ENCODE measurements at regions of chr2 and their contacts with region 1.

Region 1: DNA sequence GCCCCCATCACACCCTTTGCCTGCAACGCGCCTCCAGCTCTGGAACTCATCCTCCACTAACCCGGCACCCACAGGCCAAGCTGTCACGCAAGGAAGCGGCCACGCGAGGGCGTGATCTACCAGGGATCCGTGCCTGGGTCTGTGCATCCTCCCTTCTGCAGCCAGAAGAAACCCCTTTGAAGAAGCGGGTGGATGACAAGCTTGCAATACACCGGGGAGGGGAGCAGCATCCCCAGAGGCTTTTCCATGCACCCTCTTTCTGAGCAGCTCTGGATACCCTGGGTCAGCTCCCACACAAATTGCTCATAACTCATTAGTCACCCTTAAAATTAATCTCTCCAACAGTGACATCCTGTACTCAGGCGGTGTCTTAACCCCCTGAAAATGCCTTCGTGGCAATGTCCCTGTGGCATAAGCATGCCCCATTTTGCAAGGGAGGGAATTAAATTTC is 47.6 kb downstream of the PDCL3 start:
- DNase-seq: peak; percentile 55 to 83 (median 65)
- ATAC-seq: peak; percentile 28 to 85 (median 78)
- H3K4me3 ChIP-seq: no peak overlapping the region
- H3K27ac ChIP-seq: no peak overlapping the region
- H3K4me1 ChIP-seq: peaks cover 0 to 2% (median 0%) of the 10 kb centered on the region in 12 donors
- H3K27me3 ChIP-seq: no peaks in the 10 kb centered on the region
- CTCF ChIP-seq: peak; percentile 43 to 73 (median 56)
- POLR2A ChIP-seq: no peak

Region 2: DNA sequence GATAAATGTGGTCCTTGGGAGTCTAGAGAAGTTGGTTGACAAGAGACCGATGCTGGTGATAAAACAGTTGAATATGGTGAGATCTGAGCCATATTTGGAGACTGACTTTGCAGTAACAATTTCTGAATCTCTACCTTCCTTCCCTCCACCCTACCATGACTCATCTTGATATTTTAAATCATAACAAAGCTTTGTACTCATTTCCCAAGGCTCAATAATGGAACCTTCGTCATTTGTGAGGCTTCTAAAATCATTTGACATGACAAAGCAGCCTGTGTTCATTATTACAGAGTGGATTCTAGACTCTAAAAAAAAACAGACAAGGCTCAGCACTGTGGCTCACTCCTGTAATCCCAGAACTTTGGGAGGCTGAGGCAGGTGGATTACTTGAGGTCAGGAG is 86.1 kb before region 1 on chr2:
- intact Hi-C with region 1: no loop called
- DNase-seq: no peak
- ATAC-seq: no peak
- H3K4me3 ChIP-seq: no peak overlapping the region
- H3K27ac ChIP-seq: no peak overlapping the region
- H3K4me1 ChIP-seq: no peaks in the 10 kb centered on the region
- H3K27me3 ChIP-seq: no peaks in the 10 kb centered on the region
- CTCF ChIP-seq: no peak
- POLR2A ChIP-seq: no peak

Region 3: GRCh38 chr2:100721693-100722092 is 111.3 kb after region 1 on chr2:
- intact Hi-C with region 1: loop called in 4 of 10 experiments (anchors 5 to 10 kb)
- DNase-seq: no peak
- ATAC-seq: no peak
- H3K4me3 ChIP-seq: no peak overlapping the region
- H3K27ac ChIP-seq: no peak overlapping the region
- H3K4me1 ChIP-seq: peaks cover 0 to 3% (median 0%) of the 10 kb centered on the region in 12 donors
- H3K27me3 ChIP-seq: no peaks in the 10 kb centered on the region
- CTCF ChIP-seq: no peak
- POLR2A ChIP-seq: no peak

Region 4: DNA sequence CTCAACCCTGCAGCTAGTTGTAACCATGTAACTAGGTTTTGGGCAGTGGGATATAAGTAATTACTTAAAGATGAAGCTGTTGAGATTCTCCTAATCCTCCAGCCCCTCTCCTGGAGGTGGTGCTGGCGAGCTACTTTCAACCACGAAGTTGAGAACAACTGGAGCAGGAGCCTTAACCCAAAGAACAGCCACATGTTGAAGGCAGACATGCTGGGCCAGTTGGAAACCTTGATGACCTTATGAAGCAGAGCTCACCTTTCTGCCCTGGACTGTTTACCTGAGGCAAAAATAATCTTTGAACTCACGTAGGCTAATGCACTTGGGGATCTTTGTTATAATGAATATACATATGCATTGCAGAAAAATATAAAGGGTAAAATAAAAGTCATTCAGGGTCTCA is 119.9 kb after region 1 on chr2:
- intact Hi-C with region 1: loop called in 5 of 10 experiments (anchors 5 to 10 kb)
- DNase-seq: peak in 4 of 5 donors; percentile 44 to 78 (median 65)
- ATAC-seq: peak; percentile 79 to 84 (median 82)
- H3K4me3 ChIP-seq: no peak overlapping the region
- H3K27ac ChIP-seq: no peak overlapping the region
- H3K4me1 ChIP-seq: peaks cover 0 to 11% (median 3%) of the 10 kb centered on the region in 12 donors
- H3K27me3 ChIP-seq: no peaks in the 10 kb centered on the region
- CTCF ChIP-seq: peak; percentile 58 to 85 (median 70)
- POLR2A ChIP-seq: no peak

Region 5: GRCh38 chr2:100802066-100802465 is 191.7 kb after region 1 on chr2:
- intact Hi-C with region 1: loop called in 1 of 10 experiments (anchors 10 kb)
- DNase-seq: no peak
- ATAC-seq: peak in 3 of 4 donors; percentile 32 to 61 (median 41)
- H3K4me3 ChIP-seq: no peak overlapping the region
- H3K27ac ChIP-seq: peak overlapping the region in 1 of 12 donors; percentile 9
- H3K4me1 ChIP-seq: peaks cover 0 to 8% (median 0%) of the 10 kb centered on the region in 12 donors
- H3K27me3 ChIP-seq: no peaks in the 10 kb centered on the region
- CTCF ChIP-seq: no peak
- POLR2A ChIP-seq: no peak

Region 6: GRCh38 chr2:100813527-100813926 is 203.1 kb after region 1 on chr2:
- intact Hi-C with region 1: loop called in 3 of 10 experiments (anchors 5 to 10 kb)
- DNase-seq: no peak
- ATAC-seq: peak; percentile 59 to 84 (median 69)
- H3K4me3 ChIP-seq: peak overlapping the region in 1 of 12 donors; percentile 2
- H3K27ac ChIP-seq: peak overlapping the region in 11 of 12 donors; percentile 32 to 84 (median 59)
- H3K4me1 ChIP-seq: peaks cover 4 to 58% (median 35%) of the 10 kb centered on the region in 12 donors
- H3K27me3 ChIP-seq: peaks cover 0 to 5% (median 0%) of the 10 kb centered on the region in 9 donors
- CTCF ChIP-seq: no peak
- POLR2A ChIP-seq: no peak

Region 7: DNA sequence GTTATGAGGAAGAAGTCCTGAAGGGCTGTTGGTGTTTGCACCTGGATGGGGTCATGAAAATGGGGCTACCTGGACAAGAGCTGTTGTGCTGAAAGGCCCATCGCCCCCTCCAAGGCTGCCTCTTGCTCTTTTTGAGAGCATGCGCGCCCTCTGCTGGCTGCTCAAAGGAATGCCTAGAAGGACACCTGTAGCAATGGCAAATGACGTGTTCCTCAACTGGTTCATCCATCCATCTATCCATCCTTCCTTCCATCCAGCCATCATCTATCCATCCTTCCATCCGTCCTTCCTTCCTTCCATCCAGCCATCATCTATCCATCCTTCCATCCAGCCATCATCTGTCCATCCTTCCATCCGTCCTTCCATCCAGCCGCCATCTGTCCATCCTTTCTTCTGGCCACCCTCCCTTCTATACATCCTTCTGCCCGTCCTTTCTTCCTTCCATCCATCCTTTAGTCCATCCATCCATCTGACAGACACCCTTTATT is 374.5 kb after region 1 on chr2:
- intact Hi-C with region 1: loop called (anchors 1 to 2 kb)
- DNase-seq: peak; percentile 76 to 88 (median 79)
- ATAC-seq: peak; percentile 65 to 75 (median 66)
- H3K4me3 ChIP-seq: no peak overlapping the region
- H3K27ac ChIP-seq: peak overlapping the region in 1 of 12 donors; percentile 22
- H3K4me1 ChIP-seq: peaks cover 0 to 12% (median 0%) of the 10 kb centered on the region in 12 donors
- H3K27me3 ChIP-seq: no peaks in the 10 kb centered on the region
- CTCF ChIP-seq: peak; percentile 82 to 97 (median 90)
- POLR2A ChIP-seq: no peak

Region 8: DNA sequence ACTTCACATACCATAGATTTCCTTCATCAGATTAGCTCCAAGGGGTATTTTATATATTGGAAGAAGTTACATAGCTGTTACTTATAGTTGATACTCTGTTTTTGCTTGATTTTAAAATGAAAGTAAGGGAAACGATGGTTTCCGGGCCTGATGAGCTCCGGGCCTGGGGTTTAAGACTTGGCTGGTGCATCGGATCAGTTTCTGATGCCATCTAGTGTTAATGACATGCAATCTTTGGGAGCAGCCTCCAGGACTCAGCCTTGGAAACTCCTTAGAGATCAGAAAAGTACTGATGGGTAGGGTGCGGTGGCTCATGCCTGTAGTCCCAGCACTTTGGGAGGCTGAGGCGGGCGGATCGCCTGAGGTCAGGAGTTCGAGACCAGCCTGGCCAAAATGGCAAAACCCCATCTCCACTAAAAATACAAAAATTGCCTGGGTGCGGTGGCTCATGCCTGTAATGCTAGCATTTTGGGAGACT is 595.2 kb after region 1 on chr2:
- intact Hi-C with region 1: loop called in 1 of 10 experiments (anchors 10 kb)
- DNase-seq: peak in 4 of 5 donors; percentile 38 to 53 (median 44)
- ATAC-seq: peak; percentile 59 to 93 (median 90)
- H3K4me3 ChIP-seq: peak overlapping the region in 8 of 12 donors; percentile 14 to 40 (median 32)
- H3K27ac ChIP-seq: no peak overlapping the region
- H3K4me1 ChIP-seq: peaks cover 0 to 14% (median 0%) of the 10 kb centered on the region in 12 donors
- H3K27me3 ChIP-seq: no peaks in the 10 kb centered on the region
- CTCF ChIP-seq: peak; percentile 25 to 72 (median 52)
- POLR2A ChIP-seq: no peak

Region 9: DNA sequence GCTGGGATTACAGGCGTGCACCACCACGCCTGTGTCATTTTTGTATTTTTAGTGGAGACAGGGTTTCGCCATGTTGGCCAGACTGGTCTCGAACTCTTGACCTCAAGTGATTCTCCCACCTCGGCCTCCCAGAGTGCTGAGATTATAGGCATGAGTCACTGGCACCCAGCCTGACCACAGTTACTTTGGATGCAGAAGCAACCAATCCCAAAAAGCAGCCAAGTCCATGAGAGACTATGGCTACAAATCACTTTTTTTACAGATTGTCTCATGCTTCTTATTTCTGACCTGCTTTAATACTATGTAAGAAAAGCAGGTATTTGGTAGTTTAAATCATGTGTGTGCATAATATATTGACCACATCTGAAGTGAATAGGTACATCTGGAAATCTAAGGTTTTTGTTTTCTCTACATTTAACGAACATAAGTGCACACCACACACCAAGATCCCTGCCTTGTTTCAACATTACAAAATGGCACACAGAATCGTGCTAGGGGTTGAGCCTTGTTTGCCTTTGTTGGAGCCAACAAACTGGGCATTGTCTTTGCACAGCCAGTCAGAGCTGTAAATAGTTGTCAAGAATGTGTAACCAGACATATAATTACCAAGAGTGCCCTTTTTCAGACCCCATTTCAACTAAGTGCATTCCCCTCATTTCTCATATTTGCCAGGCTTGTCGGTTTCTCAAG is 1068.8 kb after region 1 on chr2:
- intact Hi-C with region 1: no loop called
- DNase-seq: no peak
- ATAC-seq: no peak
- H3K4me3 ChIP-seq: no peak overlapping the region
- H3K27ac ChIP-seq: no peak overlapping the region
- H3K4me1 ChIP-seq: no peaks in the 10 kb centered on the region
- H3K27me3 ChIP-seq: no peaks in the 10 kb centered on the region
- CTCF ChIP-seq: no peak
- POLR2A ChIP-seq: no peak

Measured in heart left ventricle (tissue), 16 donors.